Adrenal gland (tissue), 19 donors: ENCODE measurements at regions of chr6 and their contacts with region 1.

Region 1: DNA sequence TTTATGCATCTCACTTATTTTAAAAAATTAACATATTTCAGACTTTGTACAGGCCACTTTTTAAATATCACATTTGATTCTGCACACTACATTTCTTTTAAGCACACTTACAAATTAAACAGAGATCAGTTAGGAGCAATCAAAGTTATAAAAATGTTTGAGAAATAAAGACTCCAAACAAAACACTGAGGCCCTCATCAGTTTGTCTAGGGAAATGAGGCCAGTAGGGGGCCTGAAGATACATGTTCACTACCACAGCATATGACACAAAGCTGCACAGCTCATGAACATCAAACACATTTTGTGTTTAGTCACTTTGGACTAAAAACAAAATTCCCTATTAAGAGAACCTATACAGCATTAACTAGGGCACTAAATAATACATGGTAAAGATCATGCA is 180.5 kb downstream of the PDE7B start:
- DNase-seq: peak in 6 of 7 donors; percentile 23 to 73 (median 38)
- H3K4me3 ChIP-seq: no peak overlapping the region
- H3K27ac ChIP-seq: no peak overlapping the region
- H3K4me1 ChIP-seq: peaks cover 0 to 12% of the 10 kb centered on the region in 2 donors
- H3K27me3 ChIP-seq: no peaks in the 10 kb centered on the region
- CTCF ChIP-seq: peak in 5 of 6 experiments; percentile 34 to 59 (median 55)
- POLR2A ChIP-seq: no peak

Region 2: GRCh38 chr6:136226027-136226673 is 194.2 kb after region 1 on chr6:
- intact Hi-C with region 1: loop called (anchors 10 kb)
- DNase-seq: peak in 6 of 7 donors; percentile 41 to 84 (median 59)
- H3K4me3 ChIP-seq: peak overlapping the region in 1 of 4 donors; percentile 46
- H3K27ac ChIP-seq: no peak overlapping the region
- H3K4me1 ChIP-seq: peaks cover 0 to 17% of the 10 kb centered on the region in 2 donors
- H3K27me3 ChIP-seq: no peaks in the 10 kb centered on the region
- CTCF ChIP-seq: peak; percentile 99 to 100 (median 100)
- POLR2A ChIP-seq: no peak